ENCODE measurements at regions of chr3 and their contacts with region 1.

Region 1: GRCh38 chr3:141279077-141279967 is 47.7 kb downstream of the PXYLP1 start:
- DNase-seq: peak; percentile 75
- H3K4me3 Mint-ChIP-seq: no peak overlapping the region
- H3K27ac Mint-ChIP-seq: no peak overlapping the region
- H3K4me1 Mint-ChIP-seq: peaks cover 19% of the 10 kb centered on the region
- H3K27me3 Mint-ChIP-seq: no peaks in the 10 kb centered on the region

Region 2: GRCh38 chr3:141261472-141262307 is 17.6 kb before region 1 on chr3:
- intact Hi-C with region 1: loop called (anchors 2 kb)
- DNase-seq: no peak
- H3K4me3 Mint-ChIP-seq: peak overlapping the region; percentile 41
- H3K27ac Mint-ChIP-seq: peak overlapping the region; percentile 65
- H3K4me1 Mint-ChIP-seq: peaks cover 48% of the 10 kb centered on the region
- H3K27me3 Mint-ChIP-seq: no peaks in the 10 kb centered on the region

Measured in activated CD4-positive, alpha-beta T cell treated with anti-CD3 and anti-CD28 coated beads, Interleukin-2, amount 10 ng/mL, durations not matched to agents 24 days and 14 days (primary cell).